ENCODE measurements at regions of chr6 and their contacts with region 1.

Region 1: GRCh38 chr6:130365166-130366106 is at the start of gene TMEM200A:
- DNase-seq: peak; percentile 19 to 68 (median 28)
- ATAC-seq: peak in 2 of 4 donors; percentile 39 to 47
- H3K4me3 ChIP-seq: peak within 1 kb of the TSS; percentile 27 to 67 (median 50)
- H3K27ac ChIP-seq: peak within 1 kb of the TSS in 1 of 12 donors; percentile 19
- H3K4me1 ChIP-seq: peaks cover 0 to 19% (median 7%) of the 10 kb centered on the region in 12 donors
- H3K27me3 ChIP-seq: peaks cover 5 to 73% (median 38%) of the 10 kb centered on the region in 9 donors
- CTCF ChIP-seq: peak in 10 of 12 donors; percentile 24 to 62 (median 40)
- POLR2A ChIP-seq: no peak
- total RNA-seq, gene TMEM200A: 0.18 to 1.9 (median 0.74) TPM in 4 of 9 donors, not detected in the others

Region 2: DNA sequence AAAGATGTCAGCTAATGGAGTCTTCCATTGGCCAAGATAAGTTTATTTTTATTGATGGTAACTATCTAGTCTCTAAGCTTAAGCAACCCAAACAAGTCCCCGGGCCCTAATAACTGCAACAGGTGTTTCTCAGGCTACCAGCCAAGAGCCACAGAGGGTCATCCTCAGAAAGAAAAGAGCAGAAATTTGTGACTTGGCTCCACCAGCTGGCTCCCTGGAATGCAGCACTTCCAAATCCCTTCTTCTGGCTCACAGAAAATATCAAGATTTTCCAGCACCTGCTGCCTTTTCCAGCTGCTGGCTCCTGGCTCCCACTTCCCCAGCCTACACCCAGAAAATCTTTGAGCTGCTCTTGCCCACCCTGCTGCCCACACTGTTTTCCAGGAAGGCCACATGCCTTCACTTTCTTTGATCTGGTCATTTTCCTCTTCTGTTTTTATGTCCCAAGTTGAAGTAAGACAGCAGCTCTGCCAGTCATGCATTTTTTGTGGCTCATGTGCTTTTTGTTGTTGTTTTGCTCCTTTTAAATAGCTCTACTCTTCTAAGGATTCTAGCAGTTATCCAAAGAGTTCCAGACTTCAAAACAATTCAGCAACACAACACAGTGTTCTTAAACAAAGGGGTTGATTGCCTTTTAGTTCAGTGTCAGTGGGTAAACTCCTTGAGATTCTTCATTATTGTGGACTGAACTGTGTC is 310.8 kb after region 1 on chr6:
- intact Hi-C with region 1: loop called in 1 of 10 experiments (anchors 10 kb)
- DNase-seq: peak in 3 of 5 donors; percentile 20 to 32 (median 32)
- ATAC-seq: peak in 1 of 4 donors; percentile 48
- H3K4me3 ChIP-seq: no peak overlapping the region
- H3K27ac ChIP-seq: peak overlapping the region in 2 of 12 donors; percentile 11 to 33
- H3K4me1 ChIP-seq: peaks cover 0 to 14% (median 0%) of the 10 kb centered on the region in 12 donors
- H3K27me3 ChIP-seq: no peaks in the 10 kb centered on the region
- CTCF ChIP-seq: no peak
- POLR2A ChIP-seq: no peak

Region 3: DNA sequence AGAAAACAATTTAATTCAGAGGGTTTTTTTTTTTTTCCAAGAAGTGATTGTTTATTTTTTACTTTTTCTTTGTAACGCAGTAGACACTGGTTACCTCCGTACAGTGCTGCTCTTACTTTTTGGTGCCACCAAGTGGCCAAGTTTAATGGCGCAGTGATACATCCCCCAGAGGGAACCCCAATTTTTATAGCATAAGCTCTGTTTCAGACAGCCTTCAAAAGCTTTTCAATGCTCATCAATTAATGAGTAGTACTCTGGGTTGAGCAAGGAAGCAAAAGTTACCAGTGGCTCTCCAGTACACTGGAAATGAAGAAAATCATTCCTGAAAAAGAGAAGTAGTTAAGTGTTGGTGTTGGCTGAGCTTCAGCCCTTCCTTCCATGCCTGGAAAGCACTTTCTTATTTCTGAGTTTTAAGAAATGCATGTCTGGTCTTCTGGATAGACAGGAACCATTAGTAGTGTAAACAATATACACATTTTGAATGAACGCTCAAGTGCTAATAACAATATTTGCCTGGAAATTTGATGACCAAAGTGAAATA is 332.6 kb after region 1 on chr6:
- intact Hi-C with region 1: loop called in 1 of 10 experiments (anchors 5 kb)
- DNase-seq: peak in 2 of 5 donors; percentile 19 to 26
- ATAC-seq: no peak
- H3K4me3 ChIP-seq: no peak overlapping the region
- H3K27ac ChIP-seq: no peak overlapping the region
- H3K4me1 ChIP-seq: peaks cover 0 to 5% (median 0%) of the 10 kb centered on the region in 12 donors
- H3K27me3 ChIP-seq: no peaks in the 10 kb centered on the region
- CTCF ChIP-seq: peak; percentile 20 to 67 (median 52)
- POLR2A ChIP-seq: no peak